A673 (cell line): ENCODE measurements at regions of chr20 and their contacts with region 1.

Region 1: DNA sequence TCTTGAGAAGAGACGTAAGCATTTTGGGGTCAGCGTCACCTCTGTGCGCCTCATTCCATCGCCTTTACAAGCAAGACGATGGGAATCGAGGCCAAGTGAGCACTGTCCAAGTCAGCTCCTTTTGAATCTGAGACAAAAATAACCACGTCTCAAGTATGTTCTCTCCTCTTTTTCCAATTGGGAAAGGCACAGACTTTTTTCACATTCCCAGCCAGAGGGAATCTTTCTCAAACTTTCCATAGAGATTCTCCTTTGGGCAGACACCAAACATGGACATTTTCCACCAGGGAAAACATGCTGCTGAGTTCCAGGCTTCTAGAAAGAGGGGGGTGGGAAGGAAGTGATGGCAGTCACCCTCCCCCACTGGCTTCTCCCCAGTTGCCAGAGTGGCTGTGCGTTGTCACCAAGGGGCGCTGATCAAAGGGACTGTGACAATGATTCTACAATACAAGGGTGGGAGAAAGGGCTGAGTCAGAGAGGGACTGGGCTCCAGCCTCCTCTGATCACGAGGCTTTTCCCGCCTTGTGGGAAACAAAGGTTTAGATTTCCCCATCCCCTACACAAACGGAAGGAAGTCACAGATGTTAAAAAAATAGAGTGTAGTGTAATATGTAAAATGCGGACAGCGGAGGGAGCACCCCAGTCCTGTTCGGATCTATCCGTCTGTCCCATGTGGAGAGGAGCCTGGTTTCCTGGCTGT is 281.9 kb upstream of the RNF24 start:
- DNase-seq: peak; percentile 61
- H3K4me3 ChIP-seq: no peak overlapping the region
- H3K27ac ChIP-seq: no peak overlapping the region
- H3K4me1 ChIP-seq: peaks cover 36% of the 10 kb centered on the region
- H3K27me3 ChIP-seq: no peaks in the 10 kb centered on the region
- CTCF ChIP-seq: no peak

Region 2: DNA sequence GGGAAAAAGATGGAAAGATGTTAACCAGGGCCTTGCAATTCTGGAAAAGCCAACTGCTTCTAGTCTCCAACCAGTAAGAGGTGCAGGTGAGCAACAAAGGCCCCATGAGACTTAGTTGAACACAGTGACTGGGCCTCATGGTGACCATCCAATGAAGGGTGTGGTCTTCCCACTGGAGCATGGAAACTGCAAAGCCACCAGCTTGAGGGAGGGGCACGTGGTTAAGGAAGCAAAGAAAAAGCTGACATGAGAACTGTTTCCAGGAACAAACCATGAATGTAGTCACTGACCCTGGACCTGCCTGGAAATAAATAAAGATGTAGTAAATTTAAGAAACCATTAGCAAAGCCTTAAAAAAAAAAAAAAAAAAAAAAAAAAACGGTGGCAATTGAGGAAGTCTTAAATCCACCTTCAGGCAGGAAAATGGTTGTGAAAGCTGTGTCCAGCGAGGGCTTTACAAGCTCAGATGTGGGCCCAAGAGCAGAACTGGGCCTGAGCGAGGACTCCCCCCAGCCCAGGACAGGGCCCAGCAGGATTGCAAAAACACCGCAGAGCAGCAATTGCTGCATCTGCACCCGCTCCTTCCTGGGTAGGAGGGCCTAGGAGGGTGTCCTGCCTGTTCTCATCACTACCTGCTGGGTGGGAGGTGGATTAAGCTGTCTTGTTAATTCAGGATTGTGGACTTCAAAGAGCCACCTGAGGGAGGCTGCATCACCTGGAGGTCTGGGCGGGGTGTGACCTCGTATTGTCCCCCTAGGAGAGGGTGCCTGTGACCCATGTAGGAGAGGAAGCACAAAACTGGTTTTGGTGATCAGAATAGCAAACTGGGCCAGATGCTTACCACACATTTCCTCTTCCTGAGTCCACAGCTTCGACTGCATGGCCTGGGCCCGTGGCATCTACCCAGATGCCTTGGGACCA is 644.3 kb before region 1 on chr20:
- CTCF ChIA-PET with region 1: no interaction called
- POLR2A ChIA-PET with region 1: no interaction called
- intact Hi-C with region 1: no loop called
- DNase-seq: no peak
- H3K4me3 ChIP-seq: no peak overlapping the region
- H3K27ac ChIP-seq: no peak overlapping the region
- H3K4me1 ChIP-seq: no peaks in the 10 kb centered on the region
- H3K27me3 ChIP-seq: no peaks in the 10 kb centered on the region
- CTCF ChIP-seq: no peak

Region 3: GRCh38 chr20:3786665-3787323 is 510.5 kb before region 1 on chr20 and contains the start of gene CENPB:
- CTCF ChIA-PET with region 1: no interaction called
- POLR2A ChIA-PET with region 1: no interaction called
- intact Hi-C with region 1: no loop called
- DNase-seq: peak; percentile 93
- H3K4me3 ChIP-seq: peak within 1 kb of the TSS; percentile 84
- H3K27ac ChIP-seq: peak within 1 kb of the TSS; percentile 87
- H3K4me1 ChIP-seq: peaks cover 19% of the 10 kb centered on the region
- H3K27me3 ChIP-seq: no peaks in the 10 kb centered on the region
- CTCF ChIP-seq: peak; percentile 68
- total RNA-seq, gene CENPB: 101 and 108 TPM in 2 replicates

Region 4: GRCh38 chr20:4234128-4234527 is 63.1 kb before region 1 on chr20:
- CTCF ChIA-PET with region 1: no interaction called
- POLR2A ChIA-PET with region 1: interaction called, 10 read pairs
- intact Hi-C with region 1: no loop called
- DNase-seq: no peak
- H3K4me3 ChIP-seq: no peak overlapping the region
- H3K27ac ChIP-seq: no peak overlapping the region
- H3K4me1 ChIP-seq: peaks cover 20% of the 10 kb centered on the region
- H3K27me3 ChIP-seq: no peaks in the 10 kb centered on the region
- CTCF ChIP-seq: no peak